Mammary epithelial cell (primary cell): ENCODE measurements at regions of chr1 and their contacts with region 1.

Region 1: GRCh38 chr1:40032240-40032891 is 8.2 kb upstream of the CAP1 start:
- DNase-seq: peak; percentile 60
- H3K4me3 ChIP-seq: no peak overlapping the region
- H3K27ac ChIP-seq: no peak overlapping the region
- H3K4me1 ChIP-seq: peaks cover 30% of the 10 kb centered on the region
- H3K27me3 ChIP-seq: no peaks in the 10 kb centered on the region
- CTCF ChIP-seq: peak; percentile 69 to 70

Region 2: DNA sequence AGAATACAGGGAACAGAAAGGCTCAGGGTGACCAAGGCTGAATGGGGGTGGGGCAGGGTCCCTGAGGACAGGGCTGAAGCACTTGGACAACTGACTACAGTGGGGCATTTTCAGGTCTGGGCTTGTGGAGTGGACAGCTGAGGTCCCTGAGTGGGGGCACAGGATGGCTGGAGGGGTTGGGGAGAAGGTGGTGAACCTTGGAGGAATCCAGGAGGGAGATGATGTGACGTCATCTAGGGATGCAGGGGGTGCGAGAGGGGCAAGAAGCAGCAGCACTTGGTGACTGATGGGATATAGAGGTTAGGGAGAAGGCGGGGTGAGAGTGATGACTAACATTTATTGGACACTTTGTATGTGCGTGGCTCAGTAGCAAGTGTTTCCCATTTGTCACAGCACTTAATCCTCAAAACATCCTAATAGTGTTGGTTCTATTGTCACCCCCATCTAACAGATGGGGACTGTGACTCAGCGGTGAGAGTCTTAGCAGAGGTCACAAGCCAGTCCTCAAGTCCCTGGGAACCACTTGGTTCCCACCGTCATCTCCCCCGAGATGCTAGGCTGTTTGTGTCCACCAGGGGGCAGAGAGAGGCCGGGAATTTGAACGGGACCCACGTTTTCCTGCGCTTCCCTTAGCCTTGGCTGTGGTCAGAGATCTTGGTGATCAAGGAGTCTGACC is 215.8 kb before region 1 on chr1:
- CTCF ChIA-PET with region 1: interaction called, 4 read pairs
- dilution Hi-C with region 1: no loop called
- in situ Hi-C with region 1: no loop called
- intact Hi-C with region 1: loop called (anchors 2 kb)
- DNase-seq: peak; percentile 60
- H3K4me3 ChIP-seq: no peak overlapping the region
- H3K27ac ChIP-seq: no peak overlapping the region
- H3K4me1 ChIP-seq: no peaks in the 10 kb centered on the region
- H3K27me3 ChIP-seq: no peaks in the 10 kb centered on the region
- CTCF ChIP-seq: peak; percentile 75 to 85

Region 3: DNA sequence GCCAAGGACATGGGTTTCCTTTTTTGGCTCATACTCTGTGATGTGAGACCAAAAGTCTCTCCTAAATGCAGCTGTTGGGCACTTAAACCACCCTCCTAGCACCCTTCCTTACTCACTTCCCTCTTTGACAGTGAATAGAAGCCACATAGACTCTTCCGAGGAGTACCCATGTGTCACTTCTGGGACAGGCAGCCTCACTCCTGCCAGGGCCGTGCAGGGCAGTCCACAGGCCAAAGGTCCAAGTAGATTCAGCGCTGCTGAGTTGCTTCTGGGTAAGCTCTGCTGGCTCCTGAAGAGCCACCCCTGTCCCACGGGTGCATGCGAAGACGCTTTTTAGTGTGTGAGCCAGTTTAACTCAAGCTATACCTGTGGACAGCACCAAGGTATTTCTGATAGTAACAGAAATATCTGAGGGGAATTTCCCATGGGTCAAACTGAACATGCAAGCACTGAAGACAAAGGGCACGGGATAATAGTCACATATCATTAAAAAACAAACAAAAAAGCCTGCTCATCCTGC is 206.9 kb before region 1 on chr1:
- CTCF ChIA-PET with region 1: no interaction called
- dilution Hi-C with region 1: loop called (anchors 10 kb)
- in situ Hi-C with region 1: no loop called
- intact Hi-C with region 1: no loop called
- DNase-seq: no peak
- H3K4me3 ChIP-seq: no peak overlapping the region
- H3K27ac ChIP-seq: no peak overlapping the region
- H3K4me1 ChIP-seq: no peaks in the 10 kb centered on the region
- H3K27me3 ChIP-seq: no peaks in the 10 kb centered on the region
- CTCF ChIP-seq: no peak

Region 4: DNA sequence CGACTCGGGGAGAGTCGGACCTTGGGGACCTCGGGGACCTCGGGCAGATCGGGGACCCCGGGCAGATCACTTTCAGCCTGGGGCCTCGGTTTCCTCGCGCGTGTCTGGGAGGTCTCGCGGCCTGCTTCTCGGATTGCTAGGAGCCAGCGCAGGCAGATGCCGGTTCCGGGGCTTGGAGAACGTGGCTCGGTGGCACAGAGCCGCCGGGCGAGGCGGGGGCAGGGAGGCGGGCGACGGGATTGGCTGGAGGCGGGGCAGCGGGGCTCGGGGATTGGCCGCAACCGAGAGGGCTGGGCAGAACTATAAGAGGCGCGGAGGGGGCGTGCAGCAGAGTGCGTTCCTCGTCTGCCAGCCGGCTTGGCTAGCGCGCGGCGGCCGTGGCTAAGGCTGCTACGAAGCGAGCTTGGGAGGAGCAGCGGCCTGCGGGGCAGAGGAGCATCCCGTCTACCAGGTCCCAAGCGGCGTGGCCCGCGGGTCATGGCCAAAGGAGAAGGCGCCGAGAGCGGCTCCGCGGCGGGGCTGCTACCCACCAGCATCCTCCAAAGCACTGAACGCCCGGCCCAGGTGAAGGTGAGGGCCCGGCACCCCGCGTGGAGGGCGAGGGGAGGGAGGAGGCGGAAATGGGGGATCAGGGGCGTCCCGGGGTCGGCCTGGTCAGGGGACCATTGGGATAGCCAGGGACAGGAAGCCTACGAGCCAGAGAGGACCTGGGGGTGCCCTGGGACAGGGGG is 77.4 kb before region 1 on chr1 and contains the start of gene MFSD2A:
- CTCF ChIA-PET with region 1: interaction called, 11 read pairs
- dilution Hi-C with region 1: no loop called
- in situ Hi-C with region 1: no loop called
- intact Hi-C with region 1: no loop called
- DNase-seq: peak; percentile 92
- H3K4me3 ChIP-seq: peak within 1 kb of the TSS; percentile 74 to 78 (median 75)
- H3K27ac ChIP-seq: peak within 1 kb of the TSS; percentile 78
- H3K4me1 ChIP-seq: peaks cover 47% of the 10 kb centered on the region
- H3K27me3 ChIP-seq: no peaks in the 10 kb centered on the region
- CTCF ChIP-seq: no peak
- total RNA-seq, gene MFSD2A: 14.3 to 54.0 TPM

Region 5: GRCh38 chr1:40064797-40065499 is 32.6 kb after region 1 on chr1:
- CTCF ChIA-PET with region 1: no interaction called
- dilution Hi-C with region 1: no loop called
- in situ Hi-C with region 1: no loop called
- intact Hi-C with region 1: no loop called
- DNase-seq: no peak
- H3K4me3 ChIP-seq: no peak overlapping the region
- H3K27ac ChIP-seq: no peak overlapping the region
- H3K4me1 ChIP-seq: peaks cover 24% of the 10 kb centered on the region
- H3K27me3 ChIP-seq: no peaks in the 10 kb centered on the region
- CTCF ChIP-seq: no peak

Region 6: GRCh38 chr1:40076895-40077312 is 44.5 kb after region 1 on chr1:
- CTCF ChIA-PET with region 1: no interaction called
- dilution Hi-C with region 1: no loop called
- in situ Hi-C with region 1: no loop called
- intact Hi-C with region 1: no loop called
- DNase-seq: peak; percentile 29
- H3K4me3 ChIP-seq: no peak overlapping the region
- H3K27ac ChIP-seq: no peak overlapping the region
- H3K4me1 ChIP-seq: peaks cover 7% of the 10 kb centered on the region
- H3K27me3 ChIP-seq: no peaks in the 10 kb centered on the region
- CTCF ChIP-seq: no peak

Region 7: GRCh38 chr1:40243351-40243750 is 211.0 kb after region 1 on chr1:
- CTCF ChIA-PET with region 1: no interaction called
- dilution Hi-C with region 1: no loop called
- in situ Hi-C with region 1: no loop called
- intact Hi-C with region 1: no loop called
- DNase-seq: no peak
- H3K4me3 ChIP-seq: no peak overlapping the region
- H3K27ac ChIP-seq: no peak overlapping the region
- H3K4me1 ChIP-seq: peaks cover 18% of the 10 kb centered on the region
- H3K27me3 ChIP-seq: no peaks in the 10 kb centered on the region
- CTCF ChIP-seq: no peak

Region 8: DNA sequence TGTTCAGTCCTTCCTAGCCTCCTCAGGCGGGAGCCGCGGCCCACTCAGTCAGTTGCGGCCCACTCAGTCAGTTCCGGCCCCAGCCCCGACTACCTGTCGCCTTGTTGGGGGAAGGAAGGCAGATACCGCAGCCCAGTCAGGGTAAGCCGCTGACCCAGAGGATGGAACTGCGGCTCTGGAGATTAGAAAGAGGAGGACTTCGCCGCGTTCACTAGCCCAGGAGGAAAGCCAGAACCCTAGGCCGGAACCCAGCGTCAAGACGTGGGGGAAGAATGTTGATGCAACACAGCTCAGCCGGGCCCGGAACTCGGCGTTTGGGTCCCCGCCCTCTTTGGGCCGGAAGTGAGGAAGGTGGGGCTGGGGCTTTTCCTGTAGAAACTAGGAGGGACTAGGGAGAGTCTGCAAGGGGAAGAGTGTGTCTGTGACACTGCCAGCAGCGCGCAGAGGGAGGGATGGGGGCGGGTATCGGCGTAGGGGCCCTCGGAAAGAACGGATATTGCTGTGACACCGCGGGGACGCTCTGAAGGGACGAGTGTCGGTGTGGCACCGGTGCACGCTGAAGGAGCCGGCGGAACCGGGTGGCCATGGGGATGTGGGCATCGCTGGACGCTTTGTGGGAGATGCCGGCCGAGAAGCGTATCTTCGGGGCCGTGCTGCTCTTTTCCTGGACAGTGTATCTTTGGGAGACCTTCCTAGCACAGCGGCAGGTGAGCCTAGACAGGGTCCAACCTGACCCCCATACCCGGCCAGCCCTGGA is 225.5 kb after region 1 on chr1 and contains the start of gene ZMPSTE24:
- CTCF ChIA-PET with region 1: no interaction called
- dilution Hi-C with region 1: no loop called
- in situ Hi-C with region 1: no loop called
- intact Hi-C with region 1: no loop called
- DNase-seq: peak; percentile 98
- H3K4me3 ChIP-seq: peak within 1 kb of the TSS; percentile 85 to 93 (median 93)
- H3K27ac ChIP-seq: peak within 1 kb of the TSS; percentile 94
- H3K4me1 ChIP-seq: peaks cover 6% of the 10 kb centered on the region
- H3K27me3 ChIP-seq: no peaks in the 10 kb centered on the region
- CTCF ChIP-seq: no peak
- total RNA-seq, gene ZMPSTE24: 51.2 to 93.5 TPM